ENCODE measurements at regions of chr2 and their contacts with region 1.

Region 1: DNA sequence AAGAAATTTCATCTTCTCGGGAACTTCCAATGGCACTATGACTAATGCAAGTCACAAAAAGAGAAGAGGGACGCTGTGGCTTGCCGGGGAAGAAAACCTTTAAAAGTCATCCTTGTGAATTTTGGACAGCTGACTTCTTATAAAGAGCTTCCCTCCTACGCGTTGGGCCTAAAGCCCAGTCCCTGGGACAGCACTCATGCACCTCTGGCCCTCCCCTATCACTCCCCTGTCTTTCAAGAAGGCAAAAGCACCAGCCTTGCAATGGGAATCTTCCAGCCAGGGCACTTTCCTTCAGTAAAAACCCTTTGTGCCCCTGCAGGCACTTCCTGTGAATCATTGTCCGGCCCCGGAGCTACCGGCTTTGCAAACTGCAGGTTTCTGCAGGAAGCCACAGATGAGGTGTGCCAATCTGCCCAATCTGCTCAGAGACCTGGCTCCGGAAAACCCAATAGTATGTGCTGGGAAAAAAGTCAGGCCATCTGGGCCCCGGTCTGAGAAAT is 7.1 kb downstream of the MREG start:
- DNase-seq: peak; percentile 27
- ATAC-seq: peak; percentile 26
- H3K4me3 Mint-ChIP-seq: peak overlapping the region; percentile 74
- H3K27ac Mint-ChIP-seq: peak overlapping the region; percentile 89
- H3K4me1 Mint-ChIP-seq: peaks cover 62% of the 10 kb centered on the region
- H3K27me3 Mint-ChIP-seq: no peaks in the 10 kb centered on the region
- CTCF ChIP-seq: no peak

Region 2: DNA sequence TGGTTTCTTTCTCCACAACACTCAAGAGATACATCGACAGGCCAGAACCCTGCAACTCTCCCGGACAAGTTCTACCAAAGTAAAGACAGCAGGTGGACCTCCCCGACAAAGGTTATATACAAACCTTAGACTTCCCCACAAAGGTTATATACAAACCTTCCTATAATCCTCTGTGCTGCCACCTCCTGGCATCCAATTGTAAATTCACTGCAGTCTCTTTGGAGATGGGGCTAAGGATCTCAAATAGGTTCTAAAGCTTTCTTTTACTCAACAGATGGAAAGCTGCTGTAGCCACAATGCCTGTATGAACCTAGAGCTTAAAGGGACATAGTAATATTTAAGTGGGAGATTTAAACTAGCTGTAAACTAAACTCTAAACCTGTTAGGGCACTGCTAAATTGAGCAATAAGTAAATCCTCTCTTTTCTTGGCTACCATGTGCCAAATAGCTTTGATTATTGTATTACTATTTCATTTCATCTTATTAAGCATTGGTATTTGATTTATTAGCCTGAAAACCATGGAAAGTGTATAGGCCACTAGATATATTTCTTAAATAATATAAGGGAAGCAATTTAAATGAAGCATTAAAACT is 16.9 kb after region 1 on chr2:
- CTCF ChIA-PET with region 1: interaction called, 7 read pairs
- POLR2A ChIA-PET with region 1: interaction called, 5 read pairs
- intact Hi-C with region 1: loop called (anchors 2 kb)
- DNase-seq: no peak
- ATAC-seq: peak; percentile 49
- H3K4me3 Mint-ChIP-seq: no peak overlapping the region
- H3K27ac Mint-ChIP-seq: no peak overlapping the region
- H3K4me1 Mint-ChIP-seq: no peaks in the 10 kb centered on the region
- H3K27me3 Mint-ChIP-seq: no peaks in the 10 kb centered on the region
- CTCF ChIP-seq: no peak